Activated naive CD4-positive, alpha-beta T cell treated with anti-CD3 and anti-CD28 coated beads for 36 hours (primary cell): ENCODE measurements at regions of chr6 and their contacts with region 1.

Region 1: DNA sequence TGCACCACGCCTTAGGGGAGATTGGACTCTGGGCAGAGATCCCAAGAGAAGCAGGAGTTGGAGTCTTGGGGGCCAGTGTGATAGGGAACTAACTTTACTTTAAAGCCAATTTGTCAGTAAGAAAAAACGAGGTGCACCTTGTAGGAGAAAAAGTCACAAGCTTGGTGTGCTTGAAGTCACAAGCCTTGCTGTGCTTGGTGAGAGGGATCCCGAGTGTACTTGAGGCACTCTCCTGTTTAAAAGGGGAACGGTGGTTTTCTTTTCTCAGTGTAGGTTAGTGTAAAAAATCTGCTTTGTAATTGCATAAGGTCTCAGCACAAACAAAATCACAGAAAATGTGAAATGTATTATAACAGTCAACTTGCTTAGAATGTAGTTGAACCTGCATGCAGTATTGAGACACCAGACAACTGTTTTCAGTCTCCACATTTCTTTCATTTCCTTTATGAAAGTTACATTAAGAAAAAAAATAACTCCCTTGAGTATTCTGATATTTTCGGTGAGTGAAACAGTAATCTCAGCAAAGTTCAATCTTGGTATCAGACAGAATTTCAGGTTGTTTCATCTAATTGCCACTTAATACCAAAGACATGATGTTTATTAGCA is 111.1 kb upstream of the DUSP22 start:
- DNase-seq: no peak
- H3K4me3 Mint-ChIP-seq: no peak overlapping the region
- H3K27ac Mint-ChIP-seq: no peak overlapping the region
- H3K4me1 Mint-ChIP-seq: peaks cover 26% of the 10 kb centered on the region
- H3K27me3 Mint-ChIP-seq: peaks cover 7% of the 10 kb centered on the region

Region 2: DNA sequence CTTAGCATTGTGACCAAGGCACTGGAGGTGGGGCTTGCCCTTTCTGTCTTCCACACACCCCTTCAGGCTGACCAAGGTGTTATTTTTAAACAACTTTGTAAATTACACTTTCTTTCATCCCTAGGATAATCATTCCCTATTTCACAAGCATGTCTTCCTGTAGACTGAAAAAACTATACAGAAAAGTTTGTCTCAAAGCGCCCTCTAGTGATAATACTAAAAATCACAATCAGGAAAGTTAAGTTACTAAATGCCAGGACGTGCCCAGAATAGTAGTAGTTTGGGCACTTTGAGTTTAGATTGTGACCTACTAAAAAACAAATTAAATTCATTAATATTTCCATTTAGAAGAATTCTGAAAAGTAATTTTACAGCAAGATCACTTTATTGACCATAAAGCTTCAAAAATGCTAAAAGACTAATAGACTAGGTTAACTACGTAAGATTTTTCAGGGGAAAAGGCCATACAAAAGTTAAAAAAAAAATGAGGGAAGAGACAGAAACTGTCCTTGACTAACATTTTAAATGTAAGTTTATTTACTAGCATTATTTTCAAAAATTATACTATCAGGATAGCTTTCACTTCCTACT is 12.2 kb before region 1 on chr6:
- CTCF ChIA-PET with region 1: interaction called, 15 read pairs
- intact Hi-C with region 1: no loop called
- DNase-seq: no peak
- H3K4me3 Mint-ChIP-seq: no peak overlapping the region
- H3K27ac Mint-ChIP-seq: no peak overlapping the region
- H3K4me1 Mint-ChIP-seq: peaks cover 3% of the 10 kb centered on the region
- H3K27me3 Mint-ChIP-seq: no peaks in the 10 kb centered on the region

Region 3: DNA sequence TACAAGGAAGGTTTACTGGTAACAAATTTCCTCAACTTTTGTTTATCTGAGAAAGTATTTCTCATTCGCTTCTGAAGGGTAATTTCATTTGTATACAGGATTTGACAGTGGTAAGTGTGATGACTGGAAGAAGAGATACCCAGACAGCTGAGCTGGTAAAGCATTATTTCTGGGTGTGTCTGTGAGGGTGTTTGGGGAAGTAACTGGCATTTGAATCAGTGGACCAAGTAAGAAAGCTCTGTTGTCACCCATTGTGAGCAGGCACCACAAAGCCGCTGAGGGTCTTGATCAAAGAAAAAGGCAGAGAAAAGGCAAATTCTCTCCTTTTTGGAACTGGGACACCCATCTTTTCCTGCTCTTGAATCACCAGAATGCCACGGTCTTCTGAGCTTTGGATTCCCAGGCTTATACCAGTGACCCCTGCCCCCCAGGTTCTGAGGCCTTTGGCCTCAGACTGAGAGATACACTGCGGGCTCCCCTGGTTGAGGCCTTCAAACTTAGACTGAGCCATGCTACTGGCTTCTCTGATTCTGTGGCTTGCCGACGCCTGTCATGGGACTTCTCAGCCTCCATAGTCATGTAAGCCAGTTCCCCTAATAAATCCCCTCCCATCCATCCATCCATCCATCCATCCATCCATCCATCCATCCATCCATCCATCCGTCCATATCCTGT is 486.2 kb after region 1 on chr6:
- CTCF ChIA-PET with region 1: no interaction called
- intact Hi-C with region 1: no loop called
- DNase-seq: no peak
- H3K4me3 Mint-ChIP-seq: no peak overlapping the region
- H3K27ac Mint-ChIP-seq: no peak overlapping the region
- H3K4me1 Mint-ChIP-seq: peaks cover 28% of the 10 kb centered on the region
- H3K27me3 Mint-ChIP-seq: no peaks in the 10 kb centered on the region

Region 4: DNA sequence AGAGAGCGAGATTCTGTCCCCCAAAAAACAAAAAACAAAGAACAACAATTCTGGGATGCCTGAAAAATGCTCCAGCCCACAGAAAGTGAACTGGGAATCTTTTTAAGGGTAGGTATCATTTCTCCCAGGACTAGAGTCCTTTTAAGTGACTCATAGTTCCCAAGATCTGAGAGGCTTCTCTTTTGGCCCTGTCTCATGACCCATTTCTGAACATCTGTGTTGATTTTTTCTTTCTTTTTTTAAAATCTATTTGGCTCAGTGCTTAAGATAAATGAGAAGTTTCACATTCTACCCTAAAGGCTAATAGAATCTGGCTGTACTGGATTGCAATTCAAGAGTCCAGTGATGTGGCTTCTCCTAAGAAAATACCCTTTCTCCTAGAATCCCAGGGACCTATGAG is 913.2 kb after region 1 on chr6:
- CTCF ChIA-PET with region 1: no interaction called
- intact Hi-C with region 1: no loop called
- DNase-seq: no peak
- H3K4me3 Mint-ChIP-seq: no peak overlapping the region
- H3K27ac Mint-ChIP-seq: no peak overlapping the region
- H3K4me1 Mint-ChIP-seq: no peaks in the 10 kb centered on the region
- H3K27me3 Mint-ChIP-seq: peaks cover 10% of the 10 kb centered on the region